B cell (primary cell): ENCODE measurements at regions of chr3 and their contacts with region 1.

Region 1: DNA sequence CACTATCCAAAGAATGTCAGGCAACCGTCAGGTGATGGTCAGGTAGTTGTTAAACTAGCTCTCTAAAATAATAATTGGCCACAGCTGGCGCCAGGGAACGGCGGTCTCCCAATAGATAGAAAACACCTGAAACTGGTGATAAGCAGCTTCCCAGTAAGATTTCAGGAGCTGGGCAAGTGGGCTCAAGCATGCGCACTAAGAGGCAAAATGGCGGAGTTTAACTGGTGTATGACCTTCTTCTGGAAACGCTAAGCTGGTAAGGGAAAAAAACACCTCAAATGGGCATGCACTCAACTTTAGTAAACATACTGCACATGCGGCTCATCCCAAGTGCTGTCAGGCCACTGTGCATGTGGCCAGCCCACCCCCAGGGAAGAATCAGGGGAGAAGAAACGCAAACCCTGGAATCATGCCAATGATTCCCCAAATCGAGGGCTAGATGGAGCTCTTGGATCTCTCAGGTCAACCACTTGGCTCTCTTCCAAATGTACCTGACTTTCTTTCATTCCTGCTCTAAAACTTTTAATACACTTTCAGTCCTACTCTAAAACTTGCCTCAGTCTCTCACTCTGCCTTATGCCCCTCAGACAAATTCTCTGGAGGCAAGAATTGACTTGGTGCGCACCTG is 195.0 kb downstream of the ZNF621 start:
- DNase-seq: no peak
- ATAC-seq: no peak
- H3K4me3 ChIP-seq: no peak overlapping the region
- H3K4me3 Mint-ChIP-seq: no peak overlapping the region
- H3K27ac ChIP-seq: no peak overlapping the region
- H3K27ac Mint-ChIP-seq: no peak overlapping the region
- H3K4me1 ChIP-seq: peaks cover 24% of the 10 kb centered on the region in 2 donors
- H3K4me1 Mint-ChIP-seq: peaks cover 37% of the 10 kb centered on the region
- H3K27me3 ChIP-seq: no peaks in the 10 kb centered on the region
- H3K27me3 Mint-ChIP-seq: no peaks in the 10 kb centered on the region
- CTCF ChIP-seq: no peak

Region 2: GRCh38 chr3:40680685-40681657 is 38.8 kb before region 1 on chr3:
- CTCF ChIA-PET with region 1: no interaction called
- POLR2A ChIA-PET with region 1: no interaction called
- intact Hi-C with region 1: loop called (anchors 5 kb)
- DNase-seq: peak; percentile 48
- ATAC-seq: peak; percentile 58
- H3K4me3 ChIP-seq: no peak overlapping the region
- H3K4me3 Mint-ChIP-seq: no peak overlapping the region
- H3K27ac ChIP-seq: no peak overlapping the region
- H3K27ac Mint-ChIP-seq: no peak overlapping the region
- H3K4me1 ChIP-seq: peaks cover 5% of the 10 kb centered on the region in 2 donors
- H3K4me1 Mint-ChIP-seq: peaks cover 21% of the 10 kb centered on the region
- H3K27me3 ChIP-seq: no peaks in the 10 kb centered on the region
- H3K27me3 Mint-ChIP-seq: no peaks in the 10 kb centered on the region
- CTCF ChIP-seq: no peak

Region 3: DNA sequence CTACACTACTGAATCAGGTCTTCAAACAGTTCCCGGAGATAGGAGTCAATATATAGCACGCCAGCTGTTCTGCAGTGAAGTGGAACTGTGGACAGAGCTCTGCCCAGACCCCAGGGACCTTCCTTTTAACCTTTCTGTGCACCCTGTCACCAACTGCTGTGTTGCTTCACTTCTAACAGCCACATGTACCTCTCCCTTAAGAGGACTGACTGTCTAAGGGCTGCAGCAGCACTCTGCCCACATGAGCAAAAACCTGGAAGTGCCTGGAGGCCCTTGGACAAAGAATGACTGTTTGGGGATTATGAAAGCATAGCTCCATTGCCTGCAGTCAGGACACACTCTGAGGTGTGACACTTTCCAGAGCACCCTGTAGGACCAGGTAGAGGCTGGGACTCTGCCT is 391.2 kb after region 1 on chr3:
- CTCF ChIA-PET with region 1: no interaction called
- POLR2A ChIA-PET with region 1: no interaction called
- intact Hi-C with region 1: no loop called
- DNase-seq: no peak
- ATAC-seq: peak; percentile 33
- H3K4me3 ChIP-seq: no peak overlapping the region
- H3K4me3 Mint-ChIP-seq: no peak overlapping the region
- H3K27ac ChIP-seq: no peak overlapping the region
- H3K27ac Mint-ChIP-seq: no peak overlapping the region
- H3K4me1 ChIP-seq: peaks cover 0 to 6% of the 10 kb centered on the region in 2 donors
- H3K4me1 Mint-ChIP-seq: peaks cover 7% of the 10 kb centered on the region
- H3K27me3 ChIP-seq: no peaks in the 10 kb centered on the region
- H3K27me3 Mint-ChIP-seq: peaks cover 17% of the 10 kb centered on the region
- CTCF ChIP-seq: no peak